ENCODE measurements at regions of chr1 and their contacts with region 1.

Region 1: GRCh38 chr1:84959294-84959693 is 37.6 kb downstream of the MCOLN2 start:
- DNase-seq: no peak
- ATAC-seq: no peak
- H3K4me3 ChIP-seq: no peak overlapping the region
- H3K27ac ChIP-seq: no peak overlapping the region
- H3K4me1 ChIP-seq: no peaks in the 10 kb centered on the region
- H3K27me3 ChIP-seq: no peaks in the 10 kb centered on the region
- CTCF ChIP-seq: no peak

Region 2: GRCh38 chr1:84996846-84997666 is 37.8 kb after region 1 on chr1 and contains the start of gene MCOLN2:
- CTCF ChIA-PET with region 1: no interaction called
- POLR2A ChIA-PET with region 1: no interaction called
- in situ Hi-C with region 1: no loop called
- intact Hi-C with region 1: loop called (anchors 2 kb)
- DNase-seq: no peak
- ATAC-seq: peak; percentile 94
- H3K4me3 ChIP-seq: peak within 1 kb of the TSS; percentile 64 to 86
- H3K27ac ChIP-seq: peak within 1 kb of the TSS; percentile 84
- H3K4me1 ChIP-seq: peaks cover 9% of the 10 kb centered on the region; the same call in 1 of the 2 replicates
- H3K27me3 ChIP-seq: peaks cover 21% of the 10 kb centered on the region
- CTCF ChIP-seq: peak; percentile 52
- total RNA-seq, gene MCOLN2: 22.5 TPM

Measured in Panc1 (cell line).